ENCODE measurements at regions of chr9 and their contacts with region 1.

Region 1: DNA sequence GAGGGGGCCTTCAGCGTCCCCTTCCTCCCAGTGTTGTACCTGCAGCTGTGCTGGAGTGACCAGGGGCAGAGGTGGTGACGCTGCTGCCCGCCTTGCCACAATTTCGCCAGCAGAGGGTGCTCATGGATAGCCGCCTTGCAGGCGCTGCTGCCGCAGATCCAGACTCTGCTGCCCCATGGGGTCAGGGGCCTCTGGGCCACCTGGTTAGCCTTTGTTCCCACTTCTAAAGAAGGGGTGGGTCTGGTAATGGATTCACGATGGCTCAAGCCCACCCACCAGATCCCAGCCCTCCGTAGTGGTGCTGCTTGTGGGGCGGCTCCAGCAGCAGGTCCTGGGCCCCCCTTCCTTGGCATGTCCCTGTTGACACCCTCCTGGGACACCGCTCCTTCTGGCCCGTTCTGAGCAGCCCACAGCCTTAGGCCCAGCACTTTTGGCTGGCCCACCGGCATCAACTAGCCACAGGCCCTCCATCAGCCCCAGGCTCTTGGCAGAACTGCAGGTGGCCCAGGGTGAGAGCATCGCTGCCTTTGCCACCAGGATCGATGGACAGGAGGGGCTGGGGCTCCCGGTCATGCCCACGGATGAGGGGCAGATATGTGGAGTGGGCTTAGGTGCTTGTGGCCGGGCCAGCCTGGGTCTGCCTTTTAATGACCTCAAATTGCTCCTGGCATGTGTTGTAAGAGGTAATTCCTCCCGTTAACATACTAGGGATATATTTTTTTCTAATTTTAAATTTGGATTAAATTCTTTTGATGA is 57.2 kb downstream of the COL5A1 start:
- DNase-seq: peak; percentile 66 to 84 (median 81)
- H3K4me3 ChIP-seq: no peak overlapping the region
- H3K27ac ChIP-seq: no peak overlapping the region
- H3K4me1 ChIP-seq: peaks cover 2% of the 10 kb centered on the region
- H3K27me3 ChIP-seq: no peaks in the 10 kb centered on the region
- CTCF ChIP-seq: peak; percentile 72 to 95 (median 92)
- EP300 ChIP-seq: no peak
- POLR2A ChIP-seq: no peak

Region 2: DNA sequence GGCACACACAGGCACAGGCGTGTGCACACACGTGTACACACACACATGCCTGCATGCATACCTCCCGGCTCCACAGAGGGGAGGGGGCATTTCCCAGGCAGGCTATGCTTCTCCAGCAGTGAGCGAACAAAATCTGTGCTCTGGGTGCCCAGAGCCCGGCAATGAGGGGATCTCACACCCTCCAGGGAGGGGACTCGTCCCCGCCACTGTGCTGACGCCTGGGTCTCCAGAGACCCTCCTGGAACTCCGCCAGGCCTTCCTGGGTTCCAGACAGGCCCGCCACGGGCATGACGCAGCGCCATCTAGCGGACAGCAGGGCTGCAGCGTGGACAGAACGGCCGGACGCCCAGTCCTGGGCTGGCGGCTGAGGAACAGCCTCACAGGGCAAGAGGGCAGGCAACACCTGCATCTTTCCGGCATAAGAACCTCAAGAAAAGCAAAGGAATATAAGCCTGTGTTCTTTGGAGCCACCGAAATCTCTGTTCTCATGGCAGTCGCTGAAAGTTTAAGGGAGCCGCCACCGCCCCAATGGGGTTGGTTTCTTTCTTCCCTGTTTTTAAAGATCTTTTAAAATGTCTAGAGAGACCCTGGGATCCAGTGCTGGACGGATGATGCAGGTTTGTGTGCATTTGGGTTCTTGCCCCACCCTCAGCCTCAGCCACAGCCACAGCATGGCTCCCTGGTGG is 645.2 kb after region 1 on chr9:
- intact Hi-C with region 1: loop called in 1 of 4 experiments (anchors 10 kb)
- DNase-seq: peak; percentile 52 to 80 (median 72)
- H3K4me3 ChIP-seq: no peak overlapping the region
- H3K27ac ChIP-seq: no peak overlapping the region
- H3K4me1 ChIP-seq: peaks cover 9% of the 10 kb centered on the region
- H3K27me3 ChIP-seq: no peaks in the 10 kb centered on the region
- CTCF ChIP-seq: peak; percentile 60 to 67 (median 60)
- EP300 ChIP-seq: no peak
- POLR2A ChIP-seq: no peak